ENCODE measurements at regions of chr1 and their contacts with region 1.

Region 1: DNA sequence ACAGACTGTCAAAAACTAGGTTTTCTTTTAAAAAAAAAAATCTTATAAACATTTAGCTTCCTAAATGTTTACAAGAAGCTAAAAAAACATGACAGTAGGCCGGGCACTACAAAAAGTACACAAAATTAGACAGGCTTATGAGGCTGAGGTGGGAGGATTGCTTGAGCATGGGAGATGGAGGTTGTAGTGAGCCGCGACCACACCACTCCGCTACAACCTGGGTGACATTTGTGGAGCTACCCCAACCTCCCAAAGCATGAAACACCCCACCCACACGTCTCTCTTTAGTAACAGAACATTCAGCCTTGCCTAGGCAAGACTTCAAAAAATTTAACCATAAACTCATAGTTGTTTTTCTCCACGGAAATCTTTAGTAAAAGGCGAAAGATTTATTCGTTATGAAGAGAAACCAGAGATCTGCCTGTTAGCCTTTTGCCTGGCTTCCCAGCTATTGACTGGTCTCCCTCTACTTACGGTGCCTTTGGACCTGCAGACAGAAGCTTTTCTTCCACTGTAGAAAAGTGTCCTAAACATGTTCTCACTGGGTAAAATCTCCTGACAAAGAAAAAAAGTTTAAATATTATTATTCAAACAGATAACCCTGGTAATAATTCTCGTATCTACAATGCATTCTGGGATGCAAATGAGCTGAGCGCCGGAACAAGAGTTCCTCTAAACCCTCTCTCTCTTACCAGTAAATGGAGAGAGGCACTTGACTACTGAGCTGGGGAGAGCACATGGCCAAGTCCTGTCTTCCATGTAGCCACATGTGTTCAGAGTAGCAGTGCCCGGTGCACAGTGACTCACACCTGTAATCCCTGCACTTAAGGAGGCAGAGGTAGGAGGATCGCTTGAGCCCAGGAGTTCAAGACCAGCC is 9.2 kb downstream of the RNU5D-1 start:
- DNase-seq: peak; percentile 79
- CTCF ChIP-seq: no peak

Region 2: GRCh38 chr1:44696789-44697345 is 24.9 kb before region 1 on chr1:
- CTCF ChIA-PET with region 1: interaction called, 69 read pairs
- POLR2A ChIA-PET with region 1: interaction called, 28 read pairs
- DNase-seq: no peak
- CTCF ChIP-seq: no peak

Region 3: DNA sequence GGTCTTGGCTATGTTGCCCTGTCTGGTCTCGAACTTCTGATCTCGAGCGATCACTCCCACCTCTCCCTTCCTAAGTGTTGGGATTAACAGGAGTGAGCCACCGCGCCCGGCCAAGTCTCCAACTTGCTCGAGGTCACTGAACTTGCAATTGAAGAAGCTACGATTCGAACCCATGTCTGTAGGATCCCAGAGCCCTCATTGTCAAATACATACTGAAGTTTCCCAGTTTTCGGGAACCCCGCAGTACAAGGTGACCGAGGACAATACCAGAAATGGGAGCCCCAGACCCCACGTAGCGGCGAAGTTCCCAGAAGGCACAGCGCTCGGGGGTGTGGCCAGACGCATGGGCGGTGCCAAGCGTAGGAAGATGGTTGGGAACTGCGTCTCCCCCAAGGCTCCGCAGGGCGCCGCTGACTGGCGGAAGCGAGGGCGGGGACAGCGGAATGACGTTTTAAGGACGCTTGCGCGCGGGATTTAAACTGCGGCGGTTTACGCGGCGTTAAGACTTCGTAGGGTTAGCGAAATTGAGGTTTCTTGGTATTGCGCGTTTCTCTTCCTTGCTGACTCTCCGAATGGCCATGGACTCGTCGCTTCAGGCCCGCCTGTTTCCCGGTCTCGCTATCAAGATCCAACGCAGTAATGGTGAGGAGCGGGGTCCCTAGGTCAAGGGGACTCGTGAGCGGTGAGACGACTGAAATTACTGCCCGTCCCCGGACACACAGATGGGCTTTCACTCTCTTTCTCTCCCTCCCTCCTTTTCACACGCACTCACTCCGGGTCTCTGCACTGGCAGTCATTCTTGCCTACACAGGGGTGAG is 17.8 kb after region 1 on chr1 and contains the start of gene KIF2C:
- CTCF ChIA-PET with region 1: interaction called, 89 read pairs
- POLR2A ChIA-PET with region 1: interaction called, 16 read pairs
- DNase-seq: peak; percentile 99
- CTCF ChIP-seq: no peak

Region 4: DNA sequence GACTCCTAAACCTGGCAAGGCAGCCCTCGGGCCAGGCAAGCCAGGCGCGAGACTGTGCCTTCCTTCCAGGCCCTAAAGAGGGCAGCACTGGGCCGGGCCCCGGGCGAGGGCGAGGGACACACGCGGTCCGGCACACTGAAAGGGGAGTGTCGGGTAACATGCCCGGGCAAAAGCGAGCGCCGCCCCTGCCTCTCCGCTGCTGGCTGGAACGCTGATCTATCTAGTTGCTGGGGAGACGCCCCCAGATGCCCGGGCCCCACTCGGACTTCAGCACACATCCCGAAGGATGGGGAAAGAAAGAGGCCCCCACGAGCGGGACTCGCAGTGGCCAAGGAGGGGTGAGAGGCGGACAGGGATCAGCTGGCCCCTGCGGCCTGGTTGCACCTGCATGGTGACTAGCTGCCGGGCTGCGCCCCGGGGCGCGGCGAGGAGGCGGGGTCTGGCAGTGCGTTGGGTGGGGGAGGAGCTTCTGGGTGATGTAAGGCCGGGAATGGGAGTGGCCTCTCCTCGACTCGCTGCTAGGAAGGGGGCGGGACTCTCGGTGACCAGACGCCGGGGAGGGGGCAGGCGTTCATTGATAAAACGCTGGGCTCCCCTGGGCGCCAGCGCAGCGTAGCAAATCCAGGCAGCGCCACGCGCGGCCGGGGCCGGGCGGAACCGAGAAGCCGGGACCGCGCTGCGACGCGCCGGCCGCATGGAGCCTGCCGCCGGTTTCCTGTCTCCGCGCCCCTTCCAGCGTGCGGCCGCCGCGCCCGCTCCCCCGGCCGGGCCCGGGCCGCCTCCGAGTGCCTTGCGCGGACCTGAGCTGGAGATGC is 78.3 kb after region 1 on chr1 and contains the start of gene PLK3:
- CTCF ChIA-PET with region 1: interaction called, 4 read pairs
- POLR2A ChIA-PET with region 1: interaction called, 13 read pairs
- DNase-seq: peak; percentile 99
- CTCF ChIP-seq: peak; percentile 94

Region 5: GRCh38 chr1:44819608-44820327 is 98.0 kb after region 1 on chr1:
- CTCF ChIA-PET with region 1: interaction called, 4 read pairs
- POLR2A ChIA-PET with region 1: interaction called, 59 read pairs
- DNase-seq: peak; percentile 91
- CTCF ChIP-seq: peak; percentile 8

Region 6: GRCh38 chr1:44842862-44843655 is 121.3 kb after region 1 on chr1 and contains the start of gene PTCH2:
- CTCF ChIA-PET with region 1: no interaction called
- POLR2A ChIA-PET with region 1: no interaction called
- DNase-seq: peak; percentile 62
- CTCF ChIP-seq: no peak